ENCODE measurements at regions of chr20 and their contacts with region 1.

Region 1: DNA sequence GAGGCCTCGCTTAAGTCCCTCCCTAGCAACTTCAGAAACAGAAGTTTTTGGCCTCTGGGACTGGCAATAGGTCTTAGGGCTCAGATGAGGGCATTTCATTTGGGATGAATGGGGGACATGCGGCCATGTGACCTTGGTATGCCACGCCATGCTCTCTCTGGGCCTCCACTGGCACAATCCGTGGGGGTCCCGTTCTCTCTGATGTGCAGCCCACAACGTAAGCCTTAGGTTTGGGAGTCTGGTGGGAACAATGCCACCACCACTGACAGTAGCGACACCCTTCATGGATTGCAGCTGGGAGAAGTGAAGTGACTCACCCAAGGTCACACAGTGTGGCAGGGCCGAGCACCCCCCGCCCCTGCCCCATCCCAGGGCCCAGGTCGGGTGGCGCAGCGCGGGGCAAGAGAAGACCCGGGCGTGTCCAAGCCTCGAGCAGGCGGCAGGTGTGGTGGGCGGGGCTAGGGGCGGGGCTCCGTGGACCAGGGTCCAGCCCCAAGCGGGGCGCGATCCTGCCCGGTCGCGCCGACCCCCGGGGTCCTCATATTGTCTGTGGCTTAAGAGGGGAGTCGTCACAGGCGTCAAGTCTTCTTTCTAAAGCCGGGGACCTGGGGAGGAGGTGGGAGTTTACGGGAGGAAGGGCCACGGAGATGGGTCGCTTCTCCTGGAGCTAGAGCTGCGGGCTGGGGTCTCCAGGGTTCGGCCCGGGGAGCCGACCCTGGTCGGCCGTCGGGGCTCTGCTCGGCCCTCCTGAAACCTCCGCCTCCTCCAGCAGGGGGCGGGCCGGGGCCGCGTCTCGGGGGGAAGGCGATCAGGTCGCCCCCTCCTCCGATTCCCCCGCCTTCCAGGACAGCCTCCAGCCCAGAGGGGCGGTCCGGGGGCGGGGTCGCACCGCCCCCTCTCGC is 698 bp upstream of the CEBPB start:
- DNase-seq: peak; percentile 89 to 92
- ATAC-seq: peak; percentile 76 to 87 (median 78)
- H3K4me3 ChIP-seq: peak overlapping the region; percentile 71 to 96 (median 88)
- H3K27ac ChIP-seq: peak overlapping the region; percentile 96 to 99 (median 99)
- H3K4me1 ChIP-seq: peaks cover 6 to 35% (median 24%) of the 10 kb centered on the region in 9 donors
- H3K27me3 ChIP-seq: peaks cover 0 to 9% (median 0%) of the 10 kb centered on the region in 7 donors
- CTCF ChIP-seq: peak; percentile 63 to 87 (median 84)

Region 2: DNA sequence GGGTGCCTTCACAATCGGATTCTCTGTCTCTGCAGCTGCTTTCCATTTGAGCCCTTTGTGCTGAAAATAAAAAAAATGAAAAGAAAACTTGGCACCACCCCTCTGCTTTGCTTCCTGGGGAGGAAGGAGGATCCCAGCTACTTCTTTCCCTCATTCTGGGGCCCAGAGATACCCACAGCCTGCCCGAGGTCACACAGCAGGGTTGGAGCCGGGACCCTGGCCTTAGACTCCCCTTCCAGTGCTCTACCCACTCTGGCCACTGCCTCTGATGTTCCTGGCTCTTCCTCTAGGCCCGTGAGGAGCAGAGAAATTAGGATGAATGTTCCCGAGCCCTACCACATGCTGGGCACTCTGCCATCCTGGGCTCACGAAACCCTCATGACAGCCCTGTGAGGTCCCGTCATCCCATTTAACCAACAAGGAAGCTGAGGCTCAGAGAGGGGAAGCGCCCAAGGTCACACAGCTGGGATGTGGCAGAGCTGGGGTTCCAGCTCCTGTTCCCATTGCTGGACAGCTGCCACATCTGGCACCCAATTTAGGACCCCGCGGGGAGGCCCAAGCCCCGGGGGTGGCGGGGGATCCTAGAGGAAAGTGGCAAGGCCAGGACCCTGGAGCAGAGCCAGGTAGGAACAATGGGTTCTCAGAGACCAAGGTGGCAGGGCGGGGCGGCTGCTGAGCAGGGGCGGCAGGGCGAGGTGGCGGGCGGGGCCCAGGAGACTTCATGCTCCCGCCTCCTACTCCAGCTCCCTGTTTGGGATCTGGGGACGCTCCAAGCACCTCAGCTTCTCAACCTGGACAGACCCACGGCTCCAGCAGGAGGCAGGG is 77.3 kb after region 1 on chr20:
- intact Hi-C with region 1: loop called in 2 of 10 experiments (anchors 5 to 10 kb)
- DNase-seq: peak in 1 of 2 donors; percentile 45
- ATAC-seq: peak in 7 of 8 donors; percentile 8 to 57 (median 34)
- H3K4me3 ChIP-seq: peak overlapping the region in 1 of 10 donors; percentile 40
- H3K27ac ChIP-seq: peak overlapping the region in 2 of 10 donors; percentile 29 to 96
- H3K4me1 ChIP-seq: peaks cover 0 to 66% (median 8%) of the 10 kb centered on the region in 9 donors
- H3K27me3 ChIP-seq: no peaks in the 10 kb centered on the region
- CTCF ChIP-seq: no peak

Region 3: DNA sequence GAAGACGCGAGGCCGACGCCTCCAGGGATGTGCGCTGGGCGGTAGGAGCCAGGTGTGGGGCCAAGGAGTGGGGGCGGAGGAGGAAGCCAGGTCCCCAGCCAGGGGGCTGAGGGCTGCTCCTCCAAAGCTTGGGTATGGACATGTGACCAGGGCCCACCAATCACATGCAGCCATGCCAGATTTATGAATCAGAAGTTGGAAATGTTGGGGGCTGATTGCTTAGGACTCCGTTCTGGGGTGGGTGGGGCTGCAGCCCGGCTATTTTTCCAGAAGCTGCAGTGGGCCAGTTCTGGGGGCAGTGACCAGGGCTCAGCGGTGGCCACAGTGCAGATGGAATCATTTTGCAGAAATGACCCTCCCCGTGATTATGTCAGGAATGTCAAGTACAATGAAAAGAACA is 96.7 kb after region 1 on chr20:
- intact Hi-C with region 1: loop called in 2 of 10 experiments (anchors 5 kb)
- DNase-seq: peak in 1 of 2 donors; percentile 56
- ATAC-seq: peak in 7 of 8 donors; percentile 37 to 79 (median 61)
- H3K4me3 ChIP-seq: peak overlapping the region in 5 of 10 donors; percentile 7 to 31 (median 14)
- H3K27ac ChIP-seq: peak overlapping the region; percentile 39 to 96 (median 84)
- H3K4me1 ChIP-seq: peaks cover 10 to 62% (median 37%) of the 10 kb centered on the region in 9 donors
- H3K27me3 ChIP-seq: no peaks in the 10 kb centered on the region
- CTCF ChIP-seq: no peak

Region 4: DNA sequence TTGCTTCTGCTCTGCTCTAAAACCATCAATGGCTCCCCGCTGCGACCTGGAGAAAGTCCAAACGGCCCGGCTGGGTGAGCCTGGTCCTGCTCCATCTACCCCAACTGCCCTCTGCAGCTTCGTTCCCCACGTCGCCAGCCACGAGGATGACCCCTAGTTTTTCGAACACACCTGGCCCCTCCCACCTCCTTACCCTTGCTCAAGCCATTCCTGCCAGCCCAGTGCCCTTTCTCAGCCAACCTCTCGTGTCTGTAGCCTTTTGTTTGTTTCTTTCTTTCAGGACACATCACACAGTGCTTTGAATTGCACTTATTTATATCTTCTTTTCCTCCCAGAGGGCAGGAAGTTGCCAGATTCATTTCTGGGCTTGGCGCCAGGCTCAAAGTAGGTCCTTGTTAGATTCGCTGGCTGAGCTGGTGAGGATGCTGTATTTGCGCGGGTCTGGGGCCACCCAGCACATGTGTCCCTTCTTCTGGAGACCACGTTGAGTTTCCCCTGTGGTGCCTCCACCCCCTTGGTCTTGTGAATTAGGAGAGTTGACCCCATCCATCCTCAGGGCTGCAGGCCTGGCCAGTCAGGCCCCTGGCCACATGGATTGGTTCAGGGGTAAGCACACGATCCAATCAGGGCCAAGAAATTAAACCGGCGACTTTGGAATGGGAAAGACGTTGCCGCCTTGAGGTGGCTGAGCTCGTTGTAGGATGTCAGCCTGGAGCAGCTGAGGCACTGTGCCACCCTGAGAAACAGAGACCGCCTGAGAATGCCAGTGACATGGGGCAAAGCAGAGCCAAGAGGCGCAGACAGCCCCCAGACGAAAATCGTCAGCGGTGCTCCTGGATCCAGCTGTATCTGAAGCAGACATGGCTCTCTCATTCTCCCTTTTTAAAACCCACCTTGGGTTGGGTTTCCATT is 156.7 kb after region 1 on chr20:
- intact Hi-C with region 1: loop called in 1 of 10 experiments (anchors 10 kb)
- DNase-seq: peak; percentile 85 to 91
- ATAC-seq: peak; percentile 77 to 91 (median 84)
- H3K4me3 ChIP-seq: peak overlapping the region in 1 of 10 donors; percentile 32
- H3K27ac ChIP-seq: peak overlapping the region in 9 of 10 donors; percentile 47 to 91 (median 64)
- H3K4me1 ChIP-seq: peaks cover 9 to 77% (median 30%) of the 10 kb centered on the region in 9 donors
- H3K27me3 ChIP-seq: no peaks in the 10 kb centered on the region
- CTCF ChIP-seq: no peak

Region 5: GRCh38 chr20:50395258-50395729 is 205.4 kb after region 1 on chr20:
- intact Hi-C with region 1: loop called in 4 of 10 experiments (anchors 2 to 5 kb)
- DNase-seq: peak; percentile 44 to 79
- ATAC-seq: peak in 7 of 8 donors; percentile 33 to 86 (median 78)
- H3K4me3 ChIP-seq: no peak overlapping the region
- H3K27ac ChIP-seq: peak overlapping the region; percentile 77 to 91 (median 82)
- H3K4me1 ChIP-seq: peaks cover 0 to 60% (median 37%) of the 10 kb centered on the region in 9 donors
- H3K27me3 ChIP-seq: no peaks in the 10 kb centered on the region
- CTCF ChIP-seq: no peak

Region 6: GRCh38 chr20:50467718-50468356 is 277.9 kb after region 1 on chr20:
- intact Hi-C with region 1: loop called in 8 of 10 experiments (anchors 1 to 2 kb)
- DNase-seq: no peak
- ATAC-seq: peak in 5 of 8 donors; percentile 40 to 64 (median 43)
- H3K4me3 ChIP-seq: no peak overlapping the region
- H3K27ac ChIP-seq: no peak overlapping the region
- H3K4me1 ChIP-seq: peaks cover 0 to 52% (median 11%) of the 10 kb centered on the region in 9 donors
- H3K27me3 ChIP-seq: no peaks in the 10 kb centered on the region
- CTCF ChIP-seq: no peak

Region 7: DNA sequence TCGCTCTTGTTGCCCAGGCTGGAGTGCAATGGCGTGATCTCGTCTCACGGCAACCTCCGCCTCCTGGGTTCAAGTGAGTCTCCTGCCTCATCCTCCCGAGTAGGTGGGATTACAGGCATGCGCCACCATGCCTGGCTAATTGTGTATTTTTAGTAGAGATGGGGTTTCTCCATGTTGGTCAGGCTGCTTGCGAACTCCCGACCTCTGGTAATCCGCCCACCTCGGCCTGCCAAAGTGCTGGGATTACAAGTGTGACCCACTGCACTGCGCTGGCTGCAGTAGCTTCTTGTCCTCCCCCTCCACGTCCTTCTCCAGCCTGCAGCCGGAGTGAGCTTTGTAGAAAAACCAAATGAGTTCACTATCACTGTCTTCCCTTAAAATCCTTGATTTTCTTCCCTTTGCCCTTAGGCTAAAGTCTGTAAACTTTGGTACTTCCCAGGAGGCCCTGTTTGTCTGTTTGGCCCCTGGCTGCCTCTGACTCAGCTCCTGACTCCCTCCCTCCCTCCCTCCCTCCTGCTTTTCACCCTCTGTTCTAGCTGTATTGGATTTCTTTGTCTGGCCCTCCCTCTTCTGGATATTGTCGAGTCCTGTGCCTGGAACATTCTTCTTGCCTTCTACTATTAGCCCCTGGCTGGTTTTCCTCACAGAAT is 554.3 kb after region 1 on chr20:
- intact Hi-C with region 1: loop called in 4 of 10 experiments (anchors 5 to 10 kb)
- DNase-seq: peak; percentile 56 to 71
- ATAC-seq: peak; percentile 86 to 96 (median 91)
- H3K4me3 ChIP-seq: no peak overlapping the region
- H3K27ac ChIP-seq: peak overlapping the region; percentile 69 to 88 (median 82)
- H3K4me1 ChIP-seq: peaks cover 2 to 58% (median 30%) of the 10 kb centered on the region in 9 donors
- H3K27me3 ChIP-seq: no peaks in the 10 kb centered on the region
- CTCF ChIP-seq: peak in 7 of 9 donors; percentile 23 to 60 (median 37)